K562 (cell line): ENCODE measurements at regions of chr15 and their contacts with region 1.

Region 1: GRCh38 chr15:44918136-44918535 is 38.4 kb upstream of the TERB2 start:
- DNase-seq: no peak
- ATAC-seq: no peak
- H3K4me3 ChIP-seq: no peak overlapping the region
- H3K27ac ChIP-seq: no peak overlapping the region
- H3K4me1 ChIP-seq: no peaks in the 10 kb centered on the region; a peak in 1 of 5 replicates
- H3K27me3 ChIP-seq: no peaks in the 10 kb centered on the region
- CTCF ChIP-seq: no peak
- EP300 ChIP-seq: no peak
- POLR2A ChIP-seq: no peak
- RAD21 ChIP-seq: no peak

Region 2: DNA sequence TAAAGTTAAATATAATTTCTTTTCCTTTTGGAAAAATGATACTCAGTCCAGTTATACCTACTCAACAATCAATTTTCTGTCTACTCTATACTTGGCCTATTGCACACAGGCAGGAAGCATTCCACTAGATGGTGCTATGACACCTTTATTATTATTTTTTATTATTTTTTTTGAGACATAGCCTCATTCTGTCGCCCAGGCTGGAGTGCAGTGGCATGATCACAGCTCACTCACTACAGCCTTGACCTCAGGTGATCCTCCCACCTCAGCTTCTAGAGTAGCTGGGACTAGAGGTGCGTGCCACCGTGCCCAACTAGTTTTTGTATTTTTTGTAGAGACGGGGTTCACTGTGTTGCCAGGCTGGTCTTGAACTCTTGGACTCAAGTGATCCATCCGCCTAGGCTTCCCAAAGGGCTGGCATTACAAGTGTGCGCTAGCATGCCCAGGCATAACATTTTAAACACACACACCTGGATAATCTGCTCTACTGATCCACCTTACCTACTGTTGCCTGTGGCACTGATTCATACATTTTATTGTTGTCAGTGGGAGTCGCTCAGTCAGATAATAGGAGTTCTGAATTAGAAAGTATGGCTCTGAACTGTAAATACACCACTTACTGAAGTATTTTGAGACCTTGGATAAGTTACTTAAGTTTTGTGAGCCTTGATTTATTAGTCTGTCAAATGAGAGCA is 324.9 kb before region 1 on chr15:
- CTCF ChIA-PET with region 1: interaction called, 3 read pairs
- POLR2A ChIA-PET with region 1: no interaction called
- in situ Hi-C with region 1: loop called (anchors 10 kb)
- intact Hi-C with region 1: no loop called
- DNase-seq: peak in 1 of 4 experiments; percentile 32
- ATAC-seq: peak; percentile 90
- H3K4me3 ChIP-seq: no peak overlapping the region
- H3K27ac ChIP-seq: no peak overlapping the region
- H3K4me1 ChIP-seq: no peaks in the 10 kb centered on the region
- H3K27me3 ChIP-seq: no peaks in the 10 kb centered on the region
- CTCF ChIP-seq: peak in 2 of 3 experiments; percentile 39 to 66; a peak in 4 of 6 replicates
- EP300 ChIP-seq: no peak
- POLR2A ChIP-seq: no peak
- RAD21 ChIP-seq: peak in 1 of 2 experiments; percentile 47; a peak in 3 of 4 replicates

Region 3: DNA sequence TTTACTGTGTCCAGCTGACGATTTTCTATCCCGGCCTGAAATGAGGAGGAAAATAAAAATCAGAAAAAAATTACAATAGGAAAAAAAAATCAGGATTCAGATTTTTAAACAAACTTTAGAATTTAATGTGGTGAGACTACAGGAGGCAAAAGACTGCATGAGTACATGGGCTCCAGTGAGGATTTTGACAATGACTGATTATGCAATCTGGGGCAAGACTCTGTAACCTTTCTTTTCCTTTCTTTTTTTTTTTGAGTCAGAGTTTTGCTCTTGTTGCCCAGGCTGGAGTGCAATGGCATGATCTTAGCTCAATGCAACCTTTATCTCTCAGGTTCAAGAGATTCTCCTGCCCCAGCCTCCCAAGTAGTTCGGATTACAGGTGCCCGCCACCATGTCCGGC is 284.5 kb before region 1 on chr15:
- CTCF ChIA-PET with region 1: no interaction called
- POLR2A ChIA-PET with region 1: no interaction called
- in situ Hi-C with region 1: no loop called
- intact Hi-C with region 1: no loop called
- DNase-seq: no peak
- ATAC-seq: no peak
- H3K4me3 ChIP-seq: no peak overlapping the region
- H3K27ac ChIP-seq: no peak overlapping the region
- H3K4me1 ChIP-seq: no peaks in the 10 kb centered on the region
- H3K27me3 ChIP-seq: no peaks in the 10 kb centered on the region
- CTCF ChIP-seq: no peak
- EP300 ChIP-seq: no peak
- POLR2A ChIP-seq: no peak
- RAD21 ChIP-seq: no peak

Region 4: GRCh38 chr15:44873103-44873502 is 45.0 kb before region 1 on chr15:
- CTCF ChIA-PET with region 1: no interaction called
- POLR2A ChIA-PET with region 1: no interaction called
- in situ Hi-C with region 1: no loop called
- intact Hi-C with region 1: no loop called
- DNase-seq: no peak
- ATAC-seq: no peak
- H3K4me3 ChIP-seq: no peak overlapping the region
- H3K27ac ChIP-seq: no peak overlapping the region
- H3K4me1 ChIP-seq: no peaks in the 10 kb centered on the region
- H3K27me3 ChIP-seq: no peaks in the 10 kb centered on the region
- CTCF ChIP-seq: no peak
- EP300 ChIP-seq: no peak
- POLR2A ChIP-seq: no peak
- RAD21 ChIP-seq: no peak